ENCODE measurements at regions of chr4 and their contacts with region 1.

Region 1: DNA sequence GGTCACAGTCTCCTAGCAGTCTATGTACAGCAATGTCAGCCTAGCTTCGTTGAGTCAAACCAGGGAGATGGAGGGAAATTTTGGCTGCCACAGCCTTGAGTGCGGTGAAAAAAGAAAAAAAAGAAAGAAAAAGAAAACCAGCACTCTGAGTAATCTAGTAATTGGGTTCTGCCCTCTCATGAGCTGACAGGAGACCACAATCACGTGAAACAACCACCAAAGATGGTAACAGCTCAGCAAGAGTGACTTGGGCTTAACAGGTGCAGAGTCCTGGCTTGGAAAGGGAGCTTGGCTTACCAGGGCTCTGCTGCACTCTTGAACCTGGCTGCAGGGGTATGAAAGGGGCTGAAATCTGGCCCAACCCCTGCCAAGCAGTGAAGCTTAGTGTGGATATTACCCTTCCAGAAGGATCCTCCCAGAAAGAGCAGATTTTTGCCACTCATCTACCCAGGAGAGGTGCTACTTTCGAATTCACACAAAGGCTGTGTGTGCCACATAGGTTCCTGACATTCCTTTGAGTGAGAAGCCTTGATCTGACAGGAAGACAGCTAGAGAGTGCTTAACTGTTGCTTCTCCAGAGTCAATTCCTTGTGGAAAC is 350.3 kb downstream of the PTTG2 start:
- DNase-seq: peak; percentile 83
- H3K4me3 Mint-ChIP-seq: peak overlapping the region; percentile 51
- H3K27ac Mint-ChIP-seq: peak overlapping the region; percentile 90
- H3K4me1 Mint-ChIP-seq: peaks cover 81% of the 10 kb centered on the region
- H3K27me3 Mint-ChIP-seq: peaks cover 15% of the 10 kb centered on the region

Region 2: DNA sequence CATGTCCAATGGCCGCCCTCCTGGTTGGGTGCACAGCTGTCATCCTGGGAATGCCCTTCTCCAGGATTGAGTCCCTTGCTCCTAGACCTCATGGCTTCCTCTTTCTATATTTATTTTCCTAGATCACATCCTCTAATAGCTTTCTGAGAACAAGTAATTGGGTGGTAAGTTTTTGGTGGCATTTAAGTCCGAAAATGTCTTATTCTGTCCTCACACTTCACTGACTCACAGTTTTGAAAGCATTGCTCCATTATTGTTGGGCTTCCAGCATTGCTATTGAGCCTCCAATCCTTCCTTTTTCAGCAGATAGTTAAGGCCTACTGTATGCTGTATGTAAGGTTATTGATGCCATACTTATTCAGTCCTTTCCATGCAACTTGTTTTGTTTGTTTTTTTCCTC is 458.2 kb before region 1 on chr4:
- intact Hi-C with region 1: no loop called
- DNase-seq: no peak
- H3K4me3 Mint-ChIP-seq: no peak overlapping the region
- H3K27ac Mint-ChIP-seq: no peak overlapping the region
- H3K4me1 Mint-ChIP-seq: no peaks in the 10 kb centered on the region
- H3K27me3 Mint-ChIP-seq: no peaks in the 10 kb centered on the region

Region 3: GRCh38 chr4:37891260-37892159 is 419.0 kb before region 1 on chr4:
- intact Hi-C with region 1: loop called (anchors 2 kb)
- DNase-seq: peak; percentile 53
- H3K4me3 Mint-ChIP-seq: peak overlapping the region; percentile 93
- H3K27ac Mint-ChIP-seq: peak overlapping the region; percentile 95
- H3K4me1 Mint-ChIP-seq: peaks cover 48% of the 10 kb centered on the region
- H3K27me3 Mint-ChIP-seq: peaks cover 19% of the 10 kb centered on the region

Region 4: GRCh38 chr4:38141808-38142500 is 168.6 kb before region 1 on chr4:
- intact Hi-C with region 1: no loop called
- DNase-seq: no peak
- H3K4me3 Mint-ChIP-seq: no peak overlapping the region
- H3K27ac Mint-ChIP-seq: no peak overlapping the region
- H3K4me1 Mint-ChIP-seq: peaks cover 20% of the 10 kb centered on the region
- H3K27me3 Mint-ChIP-seq: peaks cover 2% of the 10 kb centered on the region

Region 5: GRCh38 chr4:38179690-38180377 is 130.7 kb before region 1 on chr4:
- intact Hi-C with region 1: loop called (anchors 2 kb)
- DNase-seq: peak; percentile 59
- H3K4me3 Mint-ChIP-seq: no peak overlapping the region
- H3K27ac Mint-ChIP-seq: no peak overlapping the region
- H3K4me1 Mint-ChIP-seq: peaks cover 54% of the 10 kb centered on the region
- H3K27me3 Mint-ChIP-seq: peaks cover 11% of the 10 kb centered on the region

Region 6: DNA sequence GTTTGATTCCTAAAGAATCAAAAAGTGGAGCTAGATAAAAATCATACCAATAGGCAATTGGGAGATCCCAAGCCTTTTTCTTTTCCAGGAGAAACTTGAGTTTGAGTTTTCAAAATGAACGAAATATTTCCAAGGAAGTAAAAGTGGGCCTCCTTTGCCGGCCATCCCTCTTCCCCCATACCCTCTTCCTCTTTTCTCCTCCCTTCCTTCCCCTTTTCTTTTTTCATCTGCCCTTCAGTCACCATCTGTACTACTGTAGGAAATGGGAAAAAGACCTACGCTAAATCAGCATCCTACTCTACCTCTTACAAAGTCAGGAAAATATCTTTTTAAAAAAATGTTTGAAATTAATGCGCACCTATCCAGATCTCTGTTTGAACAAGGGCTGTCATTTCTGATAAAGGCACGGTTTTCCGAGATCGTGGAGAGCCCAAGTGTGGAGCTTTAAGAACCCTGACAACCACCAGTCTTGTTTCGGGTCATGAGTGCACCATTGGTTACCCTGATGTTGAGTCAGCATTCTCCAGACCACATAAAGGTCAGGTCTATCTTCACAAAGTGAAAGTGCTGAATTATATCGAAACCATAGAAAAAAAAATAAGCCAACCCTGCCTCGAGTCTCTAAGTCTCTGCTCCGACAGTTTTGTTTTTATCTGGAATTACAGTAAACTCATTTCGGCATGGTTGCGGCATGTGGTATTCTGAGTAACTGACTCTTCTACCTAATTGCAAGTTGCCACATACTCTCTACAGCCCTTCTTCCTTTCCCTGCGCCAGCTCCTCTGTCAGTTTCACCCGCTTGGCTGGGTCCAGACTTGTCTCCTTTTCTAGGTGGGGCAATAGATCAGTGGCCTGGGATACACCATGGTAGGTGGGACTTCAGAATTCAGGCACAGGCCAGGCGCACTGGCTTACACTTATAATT is 213.2 kb after region 1 on chr4:
- intact Hi-C with region 1: loop called (anchors 1 kb)
- DNase-seq: peak; percentile 48
- H3K4me3 Mint-ChIP-seq: peak overlapping the region; percentile 19
- H3K27ac Mint-ChIP-seq: peak overlapping the region; percentile 51
- H3K4me1 Mint-ChIP-seq: peaks cover 23% of the 10 kb centered on the region
- H3K27me3 Mint-ChIP-seq: peaks cover 32% of the 10 kb centered on the region

Region 7: GRCh38 chr4:38752941-38753806 is 442.6 kb after region 1 on chr4:
- intact Hi-C with region 1: loop called (anchors 1 kb)
- DNase-seq: no peak
- H3K4me3 Mint-ChIP-seq: no peak overlapping the region
- H3K27ac Mint-ChIP-seq: no peak overlapping the region
- H3K4me1 Mint-ChIP-seq: peaks cover 22% of the 10 kb centered on the region
- H3K27me3 Mint-ChIP-seq: peaks cover 3% of the 10 kb centered on the region

Region 8: DNA sequence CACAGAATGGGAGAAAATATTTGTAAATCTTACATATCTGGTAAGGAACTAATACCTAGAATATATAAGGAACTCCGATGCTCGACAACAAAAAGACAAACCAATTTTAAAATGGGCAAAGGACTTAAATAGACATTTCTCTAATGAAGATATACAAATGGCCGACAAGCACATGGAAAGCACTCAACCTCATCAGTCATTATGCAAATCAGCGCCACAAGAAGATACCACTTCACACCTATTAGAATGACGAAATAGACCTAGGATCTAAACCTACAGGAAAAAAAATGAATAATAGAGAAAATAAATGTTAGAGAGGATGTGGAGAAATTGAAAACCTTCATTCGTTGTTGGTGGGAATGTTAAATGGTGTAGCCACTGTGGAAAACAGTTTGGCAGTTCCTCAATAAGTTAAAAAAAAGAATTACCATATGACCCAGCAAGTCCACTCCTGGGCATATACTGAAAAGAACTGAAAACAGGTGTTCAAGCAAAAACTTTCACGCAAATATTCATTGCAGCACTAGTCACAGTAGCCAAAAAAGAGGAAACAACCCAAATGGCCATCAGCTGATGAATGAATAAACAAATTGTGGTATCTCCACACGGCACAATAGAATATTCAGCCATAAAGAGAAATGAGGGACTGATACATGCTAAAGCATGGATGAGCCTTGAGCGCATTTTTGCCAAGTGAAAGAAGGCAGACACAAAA is 814.5 kb after region 1 on chr4:
- intact Hi-C with region 1: no loop called
- DNase-seq: no peak
- H3K4me3 Mint-ChIP-seq: no peak overlapping the region
- H3K27ac Mint-ChIP-seq: no peak overlapping the region
- H3K4me1 Mint-ChIP-seq: peaks cover 7% of the 10 kb centered on the region
- H3K27me3 Mint-ChIP-seq: no peaks in the 10 kb centered on the region

Measured in activated T-helper 1 cell treated with anti-CD3 and anti-CD28 coated beads, Interleukin-12 subunit alpha, Interleukin-12 subunit beta, Interleukin-2, Interleukin-4 antibody, amounts not matched to agents 30 ng/mL and 10 ng/mL and 1 ng/mL, durations not matched to agents 14 hours and 24 hours and 36 hours (primary cell).